Dendritic cell treated with granulocyte-macrophage colony-stimulating factor and Interleukin-4, amounts not matched to agents 40 ng/mL and 50 ng/mL, for 4 days (primary cell): ENCODE measurements at regions of chr13 and their contacts with region 1.

Region 1: GRCh38 chr13:30465585-30466357 is at the start of gene HMGB1:
- H3K4me3 Mint-ChIP-seq: peak within 1 kb of the TSS; percentile 93
- H3K27ac Mint-ChIP-seq: peak within 1 kb of the TSS; percentile 96
- H3K4me1 Mint-ChIP-seq: peaks cover 27% of the 10 kb centered on the region
- H3K27me3 Mint-ChIP-seq: no peaks in the 10 kb centered on the region

Region 2: DNA sequence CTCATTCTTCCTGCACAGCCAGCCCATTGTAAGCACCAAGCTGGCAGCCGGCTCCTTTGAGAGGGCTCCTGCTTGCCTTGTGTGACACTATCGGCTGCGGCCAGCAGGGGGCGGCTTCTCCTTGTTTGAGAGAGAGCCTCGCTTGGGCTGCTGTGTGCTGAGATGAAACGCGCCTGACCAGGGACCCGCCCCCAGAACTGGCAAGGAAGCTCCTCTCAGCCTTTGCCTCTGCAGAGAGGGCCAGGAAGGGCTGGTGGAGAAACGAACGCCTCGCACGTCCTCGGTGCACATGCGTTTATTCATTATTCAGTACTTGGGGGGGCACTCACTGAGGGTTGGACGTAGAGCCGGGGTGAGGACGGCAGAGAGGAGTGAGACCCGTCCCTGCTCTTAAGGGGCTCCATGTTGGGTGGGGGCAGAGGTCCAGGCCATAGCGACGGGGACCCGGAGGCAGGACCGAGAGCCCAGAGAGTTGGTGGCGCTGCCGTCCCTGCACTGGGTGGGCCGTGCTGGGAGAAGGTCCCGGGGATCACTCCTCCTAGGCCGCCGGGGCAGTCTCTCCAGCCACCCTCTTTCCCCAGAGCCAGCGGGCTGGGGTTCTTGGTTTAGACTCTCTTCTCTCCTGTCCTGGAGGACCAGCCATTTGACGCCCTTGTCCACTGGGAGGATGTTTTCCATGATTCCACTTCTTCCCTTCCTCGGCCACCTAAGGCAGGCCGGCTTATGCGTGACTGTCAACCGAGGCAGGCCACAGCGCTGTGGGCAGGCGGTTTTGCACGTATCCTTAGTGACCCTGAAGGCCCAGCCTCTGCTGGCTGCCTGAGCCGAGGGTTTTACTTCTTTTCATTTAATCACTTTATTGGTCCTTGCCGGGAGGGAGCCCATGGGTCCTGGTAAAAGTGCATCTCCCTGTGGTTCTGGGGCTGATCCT is 332.9 kb before region 1 on chr13:
- intact Hi-C with region 1: loop called (anchors 5 kb)
- H3K4me3 Mint-ChIP-seq: no peak overlapping the region
- H3K27ac Mint-ChIP-seq: no peak overlapping the region
- H3K4me1 Mint-ChIP-seq: peaks cover 6% of the 10 kb centered on the region
- H3K27me3 Mint-ChIP-seq: no peaks in the 10 kb centered on the region

Region 3: GRCh38 chr13:30355384-30355699 is 110.4 kb before region 1 on chr13:
- intact Hi-C with region 1: loop called (anchors 5 kb)
- H3K4me3 Mint-ChIP-seq: no peak overlapping the region
- H3K27ac Mint-ChIP-seq: no peak overlapping the region
- H3K4me1 Mint-ChIP-seq: peaks cover 26% of the 10 kb centered on the region
- H3K27me3 Mint-ChIP-seq: no peaks in the 10 kb centered on the region

Region 4: GRCh38 chr13:30408319-30409101 is 57.3 kb before region 1 on chr13:
- intact Hi-C with region 1: loop called (anchors 5 kb)
- H3K4me3 Mint-ChIP-seq: peak overlapping the region; percentile 64
- H3K27ac Mint-ChIP-seq: peak overlapping the region; percentile 90
- H3K4me1 Mint-ChIP-seq: peaks cover 26% of the 10 kb centered on the region
- H3K27me3 Mint-ChIP-seq: peaks cover 4% of the 10 kb centered on the region

Region 5: DNA sequence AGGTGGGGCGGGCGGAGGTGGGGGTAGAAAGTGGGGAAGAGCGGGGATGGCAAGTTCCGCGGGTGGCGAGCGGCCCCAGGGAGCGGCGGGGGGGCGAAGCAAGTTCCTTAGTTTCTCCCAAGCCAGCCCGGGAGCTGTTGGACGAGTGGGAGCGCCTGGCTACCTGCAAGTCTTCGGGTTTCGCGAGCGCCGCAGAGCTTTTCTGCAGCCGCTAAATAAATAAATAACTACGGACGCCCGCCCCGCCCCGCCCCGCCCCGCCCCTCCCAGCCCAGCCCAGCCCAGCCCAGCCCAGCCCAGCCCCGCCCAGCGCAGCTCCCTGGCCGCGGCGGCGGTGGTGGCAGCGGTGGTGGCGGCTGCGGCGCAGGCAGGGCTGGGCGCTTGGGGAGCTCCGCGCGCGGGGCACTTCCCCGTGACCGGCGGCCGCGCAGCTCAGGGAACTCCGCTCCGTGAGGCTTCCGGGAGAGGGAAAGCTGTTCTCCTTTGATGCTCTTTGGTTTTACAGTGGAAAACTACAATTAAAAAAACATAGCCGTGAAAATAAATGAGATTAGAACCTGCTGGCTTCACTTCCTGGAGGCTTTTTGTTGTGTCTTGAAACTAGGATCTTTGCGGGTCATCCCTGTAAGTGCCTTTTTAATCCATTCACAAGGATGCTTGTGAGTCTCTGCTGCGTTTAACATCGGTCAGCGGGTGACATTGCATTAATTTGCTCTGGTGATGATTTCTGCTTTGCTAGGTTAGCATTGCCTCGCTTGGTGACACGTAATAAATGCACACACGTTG is 43.5 kb before region 1 on chr13 and contains the start of gene UBE2L5:
- intact Hi-C with region 1: loop called (anchors 1 kb)
- H3K4me3 Mint-ChIP-seq: peak within 1 kb of the TSS; percentile 77
- H3K27ac Mint-ChIP-seq: peak within 1 kb of the TSS; percentile 92
- H3K4me1 Mint-ChIP-seq: peaks cover 23% of the 10 kb centered on the region
- H3K27me3 Mint-ChIP-seq: peaks cover 2% of the 10 kb centered on the region

Region 6: GRCh38 chr13:30572859-30573275 is 107.1 kb after region 1 on chr13:
- intact Hi-C with region 1: loop called (anchors 5 kb)
- H3K4me3 Mint-ChIP-seq: peak overlapping the region; percentile 9
- H3K27ac Mint-ChIP-seq: peak overlapping the region; percentile 63
- H3K4me1 Mint-ChIP-seq: peaks cover 35% of the 10 kb centered on the region
- H3K27me3 Mint-ChIP-seq: peaks cover 11% of the 10 kb centered on the region